CD8-positive, alpha-beta T cell (primary cell): ENCODE measurements at regions of chr2 and their contacts with region 1.

Region 1: DNA sequence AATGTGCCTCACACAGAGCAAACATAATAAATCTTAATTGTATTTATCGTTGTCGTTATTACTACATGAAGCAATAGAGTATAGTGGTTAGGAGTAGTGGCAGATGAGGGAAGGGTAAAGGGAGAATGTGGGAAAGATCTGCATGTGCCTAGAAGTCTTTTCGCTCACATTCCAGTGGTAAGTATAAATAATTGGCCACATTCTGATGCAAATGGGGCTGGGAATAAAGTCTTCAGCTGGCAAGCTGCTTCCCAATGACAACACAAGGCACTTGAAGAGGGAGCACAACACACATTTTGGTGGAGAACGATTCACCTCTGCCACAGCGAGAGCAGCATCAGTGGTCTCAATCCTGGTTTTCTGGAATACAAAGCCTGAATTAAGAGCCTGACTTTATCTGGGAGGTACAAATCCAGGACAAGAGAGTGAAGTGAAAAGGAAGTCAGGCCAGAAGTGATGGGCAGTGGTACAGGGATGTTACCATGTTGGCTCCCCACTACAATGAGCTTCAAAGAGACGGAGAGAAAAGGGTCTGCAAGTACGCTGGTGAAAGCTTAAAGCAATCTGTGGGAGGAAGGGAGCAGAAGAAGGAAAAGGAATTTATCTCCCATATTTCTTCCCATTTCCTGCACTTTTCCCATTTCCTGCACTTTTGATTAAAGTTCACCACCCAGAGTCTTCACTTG is 112.3 kb downstream of the ARHGAP15 start:
- DNase-seq: no peak
- ATAC-seq: no peak
- H3K4me3 ChIP-seq: no peak overlapping the region
- H3K4me3 Mint-ChIP-seq: no peak overlapping the region
- H3K27ac ChIP-seq: no peak overlapping the region
- H3K27ac Mint-ChIP-seq: peak overlapping the region; percentile 34
- H3K4me1 ChIP-seq: peaks cover 11% of the 10 kb centered on the region
- H3K4me1 Mint-ChIP-seq: peaks cover 30% of the 10 kb centered on the region
- H3K27me3 ChIP-seq: no peaks in the 10 kb centered on the region
- H3K27me3 Mint-ChIP-seq: no peaks in the 10 kb centered on the region
- CTCF ChIP-seq: no peak

Region 2: GRCh38 chr2:143230506-143231253 is 10.9 kb before region 1 on chr2:
- CTCF ChIA-PET with region 1: no interaction called
- POLR2A ChIA-PET with region 1: interaction called, 3 read pairs
- intact Hi-C with region 1: loop called in 1 of 2 experiments (anchors 2 kb)
- DNase-seq: no peak
- ATAC-seq: no peak
- H3K4me3 ChIP-seq: no peak overlapping the region
- H3K4me3 Mint-ChIP-seq: no peak overlapping the region
- H3K27ac ChIP-seq: no peak overlapping the region
- H3K27ac Mint-ChIP-seq: peak overlapping the region; percentile 3
- H3K4me1 ChIP-seq: peaks cover 18% of the 10 kb centered on the region
- H3K4me1 Mint-ChIP-seq: peaks cover 39% of the 10 kb centered on the region
- H3K27me3 ChIP-seq: no peaks in the 10 kb centered on the region
- H3K27me3 Mint-ChIP-seq: no peaks in the 10 kb centered on the region
- CTCF ChIP-seq: no peak